Activated CD8-positive, alpha-beta T cell treated with anti-CD3 and anti-CD28 coated beads for 36 hours (primary cell): ENCODE measurements at regions of chr4 and their contacts with region 1.

Region 1: GRCh38 chr4:127604949-127605709 is 27.6 kb upstream of the INTU start:
- DNase-seq: no peak
- ATAC-seq: no peak
- H3K4me3 Mint-ChIP-seq: no peak overlapping the region
- H3K27ac Mint-ChIP-seq: no peak overlapping the region
- H3K4me1 Mint-ChIP-seq: no peaks in the 10 kb centered on the region
- H3K27me3 Mint-ChIP-seq: peaks cover 8% of the 10 kb centered on the region
- CTCF ChIP-seq: peak; percentile 44

Region 2: DNA sequence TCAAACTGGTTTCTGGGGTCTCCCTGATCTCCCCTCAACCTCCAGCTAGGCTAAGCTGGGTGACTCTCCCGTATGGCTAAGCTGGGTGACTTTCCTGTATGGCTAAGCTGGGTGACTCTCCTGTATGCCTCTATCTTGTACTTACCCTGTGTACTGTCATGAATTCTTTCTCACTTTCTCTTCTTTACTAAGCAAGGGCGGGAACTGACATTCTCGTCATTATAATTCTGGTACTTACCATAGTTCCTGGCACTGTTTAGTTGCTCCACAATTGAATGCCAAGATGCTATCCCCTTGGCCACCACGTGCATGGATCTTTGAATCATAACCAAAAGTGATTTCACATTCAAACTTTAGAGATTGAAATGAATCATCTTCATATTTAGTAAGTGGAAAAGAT is 36.4 kb after region 1 on chr4:
- CTCF ChIA-PET with region 1: no interaction called
- POLR2A ChIA-PET with region 1: no interaction called
- intact Hi-C with region 1: no loop called
- DNase-seq: no peak
- ATAC-seq: no peak
- H3K4me3 Mint-ChIP-seq: no peak overlapping the region
- H3K27ac Mint-ChIP-seq: no peak overlapping the region
- H3K4me1 Mint-ChIP-seq: no peaks in the 10 kb centered on the region
- H3K27me3 Mint-ChIP-seq: peaks cover 2% of the 10 kb centered on the region
- CTCF ChIP-seq: no peak

Region 3: DNA sequence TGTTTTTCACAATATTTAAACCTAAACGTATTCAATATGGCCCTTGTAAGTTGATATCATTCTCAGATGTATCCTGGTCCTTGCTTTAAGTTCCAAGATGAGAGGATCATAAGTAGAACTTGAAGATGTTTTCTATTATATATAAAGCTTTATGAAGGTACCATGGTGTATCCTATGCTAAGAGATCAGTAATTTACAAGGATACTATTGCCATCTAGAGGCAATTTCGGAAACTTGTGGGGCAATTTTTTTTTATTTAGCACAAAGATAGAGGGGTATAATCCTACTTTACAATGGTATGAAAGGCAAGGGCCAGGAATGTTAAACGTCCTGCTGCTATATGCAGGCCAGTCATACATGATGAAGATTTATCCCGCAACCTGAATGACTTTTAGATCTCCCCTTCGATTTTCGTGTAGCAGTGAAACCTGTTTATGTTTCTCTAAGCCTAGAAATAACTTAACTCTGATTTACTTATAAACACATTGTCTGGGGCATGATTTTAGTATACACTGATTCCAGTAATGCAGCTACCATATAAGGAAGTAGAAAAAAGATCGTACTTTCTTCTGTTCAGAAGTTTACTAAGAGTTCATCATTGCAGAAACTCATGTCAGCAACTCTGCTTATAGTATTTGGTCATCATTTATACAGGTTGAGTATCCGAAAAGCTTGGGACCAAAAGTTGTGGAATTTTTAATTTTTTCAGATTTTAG is 127.6 kb after region 1 on chr4:
- CTCF ChIA-PET with region 1: interaction called, 11 read pairs
- POLR2A ChIA-PET with region 1: no interaction called
- intact Hi-C with region 1: loop called (anchors 2 kb)
- DNase-seq: no peak
- ATAC-seq: no peak
- H3K4me3 Mint-ChIP-seq: no peak overlapping the region
- H3K27ac Mint-ChIP-seq: no peak overlapping the region
- H3K4me1 Mint-ChIP-seq: no peaks in the 10 kb centered on the region
- H3K27me3 Mint-ChIP-seq: peaks cover 2% of the 10 kb centered on the region
- CTCF ChIP-seq: no peak